Dorsolateral prefrontal cortex (tissue), 120 donors: ENCODE measurements at regions of chr19 and their contacts with region 1.

Region 1: DNA sequence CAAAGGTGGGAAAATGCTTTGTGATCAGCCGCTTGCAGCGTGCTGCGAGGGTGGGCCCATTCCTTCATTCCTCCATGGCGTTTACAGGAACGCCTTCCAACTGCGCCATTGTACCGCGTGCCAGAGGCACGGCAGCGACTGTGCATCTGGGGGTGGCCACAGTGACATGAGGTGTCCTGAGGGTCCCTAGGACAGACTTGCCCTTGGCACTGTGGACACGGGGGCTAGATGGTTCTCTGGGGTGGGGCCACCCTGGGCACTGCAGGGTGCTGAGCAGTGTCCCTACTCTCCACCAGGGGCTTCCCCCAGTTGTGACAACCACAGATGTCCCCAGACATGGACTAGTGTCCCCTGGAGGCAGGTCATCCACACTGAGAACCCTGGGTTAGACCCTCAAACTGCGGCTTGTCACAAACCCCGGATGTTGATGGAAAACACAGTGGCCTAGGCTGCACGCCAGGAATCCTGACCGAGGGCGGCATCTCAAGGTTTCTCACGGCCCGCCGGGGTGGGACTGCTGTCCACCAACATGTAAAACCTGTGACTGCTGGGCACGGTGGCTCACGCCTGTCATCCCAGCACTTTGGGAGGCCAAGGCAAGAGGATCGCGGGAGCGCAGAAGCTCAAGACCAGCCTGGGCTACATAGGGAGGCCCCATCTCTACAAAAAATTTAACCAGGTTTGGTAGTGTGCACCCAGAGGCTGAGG is 11.4 kb downstream of the PLIN4 start:
- DNase-seq: no peak
- H3K4me3 ChIP-seq: no peak overlapping the region
- H3K27ac ChIP-seq: peak overlapping the region in 1 of 59 donors; percentile 5
- H3K27me3 ChIP-seq: no peaks in the 10 kb centered on the region
- CTCF ChIP-seq: no peak

Region 2: DNA sequence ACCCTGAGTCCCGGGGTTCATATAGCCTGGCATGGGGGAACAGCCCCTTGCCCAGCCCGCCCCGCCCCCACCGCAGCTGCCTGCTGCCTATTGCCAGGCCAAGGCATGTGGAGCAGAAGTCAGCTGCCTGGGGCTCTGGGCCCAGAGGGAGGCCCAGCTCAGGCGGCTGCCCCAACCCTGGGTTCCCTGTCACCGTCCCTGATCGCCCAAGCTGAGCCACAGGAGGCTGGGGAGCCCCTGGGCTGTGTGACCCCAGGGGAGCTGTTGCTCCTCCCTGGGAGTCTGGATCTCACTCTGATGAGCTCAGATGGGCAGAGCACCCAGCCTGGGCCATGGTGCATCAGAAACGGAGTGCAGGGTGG is 10.0 kb after region 1 on chr19:
- intact Hi-C with region 1: loop called in 1 of 2 experiments (anchors 1 kb)
- DNase-seq: no peak
- H3K4me3 ChIP-seq: peak overlapping the region in 2 of 59 donors; percentile 11 to 20
- H3K27ac ChIP-seq: peak overlapping the region in 4 of 59 donors; percentile 17 to 48 (median 45)
- H3K27me3 ChIP-seq: no peaks in the 10 kb centered on the region
- CTCF ChIP-seq: no peak